ENCODE measurements at regions of chr5 and their contacts with region 1.

Region 1: DNA sequence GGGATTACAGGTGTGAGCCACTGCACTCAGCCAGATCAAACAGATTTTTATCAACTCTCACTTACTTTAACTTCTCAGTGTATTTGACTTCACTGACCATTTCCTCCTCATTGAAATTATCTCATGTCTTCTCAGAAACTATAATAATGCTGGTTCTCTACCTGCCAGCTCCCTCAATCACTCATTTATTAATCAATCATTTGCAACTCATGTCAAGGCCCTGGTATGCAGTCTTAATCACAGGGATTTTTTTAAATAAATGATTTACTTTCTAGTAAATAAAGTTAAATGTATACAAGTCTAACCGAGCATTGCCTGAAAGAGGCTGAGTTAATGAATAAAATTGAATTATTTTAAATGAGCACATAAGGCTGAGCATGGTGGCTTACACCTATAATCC is 63.3 kb downstream of the PLPP1 start:
- DNase-seq: no peak
- H3K4me3 ChIP-seq: no peak overlapping the region
- H3K27ac ChIP-seq: no peak overlapping the region
- H3K4me1 ChIP-seq: no peaks in the 10 kb centered on the region
- H3K27me3 ChIP-seq: no peaks in the 10 kb centered on the region
- CTCF ChIP-seq: no peak
- POLR2A ChIP-seq: no peak

Region 2: DNA sequence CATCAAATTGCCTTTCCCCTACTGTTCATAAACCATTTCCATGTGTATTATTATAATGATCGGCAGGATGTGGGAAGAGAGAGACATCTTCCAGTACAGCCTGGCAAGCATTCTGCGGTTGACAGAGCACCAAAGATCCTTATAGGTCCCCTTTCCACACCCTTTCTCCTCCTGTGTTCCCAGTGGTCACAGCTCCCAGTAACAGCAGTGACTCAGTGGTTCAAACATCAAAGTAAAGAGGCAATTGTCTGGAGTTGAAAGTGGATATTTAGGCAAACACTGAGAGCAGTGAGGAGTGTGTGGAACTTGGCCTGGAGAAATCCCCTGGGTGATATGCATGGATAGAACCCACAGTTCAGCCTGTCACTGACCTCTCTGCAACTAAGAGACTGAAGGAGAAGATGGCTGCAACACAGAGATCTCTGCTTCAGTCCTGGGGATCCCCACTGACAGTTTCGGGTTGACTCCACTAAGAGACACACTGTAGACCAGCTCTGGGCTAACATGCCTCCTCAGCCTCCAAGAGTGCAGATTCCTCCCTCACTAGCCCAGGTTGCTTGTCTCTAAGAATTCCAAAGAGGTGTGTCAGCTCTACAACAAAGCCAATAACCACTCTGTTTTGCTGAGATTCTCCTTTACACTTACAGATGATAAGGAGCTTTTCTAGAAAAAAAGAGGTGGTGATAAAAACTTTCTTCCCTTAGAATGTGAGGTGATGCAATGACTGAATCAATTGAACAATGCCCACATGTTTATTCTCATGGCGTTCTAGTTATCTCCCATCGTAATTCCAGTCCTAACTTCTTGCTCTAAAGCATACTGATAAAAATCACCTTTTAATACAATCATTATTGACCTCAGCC is 617.7 kb after region 1 on chr5:
- intact Hi-C with region 1: loop called (anchors 5 kb)
- DNase-seq: no peak
- H3K4me3 ChIP-seq: no peak overlapping the region
- H3K27ac ChIP-seq: peak overlapping the region in 1 of 2 donors; percentile 41
- H3K4me1 ChIP-seq: peaks cover 0 to 7% of the 10 kb centered on the region in 2 donors
- H3K27me3 ChIP-seq: no peaks in the 10 kb centered on the region
- CTCF ChIP-seq: no peak
- POLR2A ChIP-seq: no peak

Region 3: GRCh38 chr5:56490951-56491468 is 1019.5 kb after region 1 on chr5:
- intact Hi-C with region 1: loop called (anchors 5 kb)
- DNase-seq: peak in 1 of 2 donors; percentile 87
- H3K4me3 ChIP-seq: no peak overlapping the region
- H3K27ac ChIP-seq: peak overlapping the region; percentile 39 to 66
- H3K4me1 ChIP-seq: no peaks in the 10 kb centered on the region
- H3K27me3 ChIP-seq: no peaks in the 10 kb centered on the region
- CTCF ChIP-seq: no peak
- POLR2A ChIP-seq: no peak